Sciatic nerve (tissue), 2 donors: ENCODE measurements at regions of chr4 and their contacts with region 1.

Region 1: DNA sequence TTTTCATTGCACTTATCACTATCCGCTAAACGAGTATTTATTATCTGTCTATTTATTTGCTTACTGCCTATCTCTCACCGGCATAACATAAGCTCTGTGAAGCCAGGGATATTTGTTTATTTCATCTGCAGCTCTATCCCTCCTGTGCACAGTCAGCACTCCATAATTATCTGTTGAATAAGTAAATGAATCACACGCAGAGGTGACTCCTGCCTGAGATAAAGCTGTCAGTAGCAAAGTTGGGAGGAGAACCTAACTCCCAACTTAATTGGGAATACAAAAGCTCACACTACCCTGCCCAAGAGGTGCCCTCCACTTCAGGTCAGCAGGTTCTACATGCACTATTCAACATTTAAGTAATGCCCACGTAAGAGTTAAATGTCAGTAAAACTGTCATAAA is 85.7 kb downstream of the CORIN start:
- DNase-seq: no peak
- ATAC-seq: no peak

Region 2: GRCh38 chr4:47762376-47763266 is 10.4 kb after region 1 on chr4:
- intact Hi-C with region 1: loop called (anchors 2 kb)
- DNase-seq: no peak
- ATAC-seq: no peak